B cell (primary cell): ENCODE measurements at regions of chr6 and their contacts with region 1.

Region 1: DNA sequence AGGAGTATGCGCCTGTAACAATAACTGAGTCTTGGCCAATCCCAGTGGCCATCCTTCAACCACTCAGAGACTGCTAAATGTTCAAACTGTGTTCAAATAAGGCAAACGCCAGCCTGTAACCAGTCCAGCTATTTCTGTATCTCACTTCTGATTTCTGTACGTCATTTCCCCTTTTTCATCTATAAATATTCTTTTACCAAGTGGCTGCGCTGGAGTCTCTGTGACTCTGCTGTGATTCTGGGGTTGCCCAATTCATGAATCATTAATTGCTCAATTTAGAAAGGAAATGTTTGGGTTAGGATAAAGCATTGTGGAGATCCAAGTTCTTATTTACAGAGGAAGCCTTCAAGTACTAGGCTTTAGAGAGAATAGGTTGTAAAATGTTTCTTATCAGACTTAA is 89.8 kb upstream of the UST start:
- DNase-seq: peak; percentile 64
- ATAC-seq: peak; percentile 75
- H3K4me3 ChIP-seq: no peak overlapping the region
- H3K4me3 Mint-ChIP-seq: peak overlapping the region; percentile 60
- H3K27ac ChIP-seq: peak overlapping the region; percentile 31 to 47
- H3K27ac Mint-ChIP-seq: peak overlapping the region; percentile 68
- H3K4me1 ChIP-seq: peaks cover 13 to 16% of the 10 kb centered on the region in 2 donors
- H3K4me1 Mint-ChIP-seq: peaks cover 17% of the 10 kb centered on the region
- H3K27me3 ChIP-seq: no peaks in the 10 kb centered on the region
- H3K27me3 Mint-ChIP-seq: no peaks in the 10 kb centered on the region
- CTCF ChIP-seq: no peak

Region 2: GRCh38 chr6:148620579-148621298 is 36.3 kb before region 1 on chr6:
- CTCF ChIA-PET with region 1: no interaction called
- POLR2A ChIA-PET with region 1: no interaction called
- intact Hi-C with region 1: no loop called
- DNase-seq: no peak
- ATAC-seq: no peak
- H3K4me3 ChIP-seq: no peak overlapping the region
- H3K4me3 Mint-ChIP-seq: no peak overlapping the region
- H3K27ac ChIP-seq: no peak overlapping the region
- H3K27ac Mint-ChIP-seq: no peak overlapping the region
- H3K4me1 ChIP-seq: no peaks in the 10 kb centered on the region
- H3K4me1 Mint-ChIP-seq: peaks cover 2% of the 10 kb centered on the region
- H3K27me3 ChIP-seq: no peaks in the 10 kb centered on the region
- H3K27me3 Mint-ChIP-seq: no peaks in the 10 kb centered on the region
- CTCF ChIP-seq: no peak

Region 3: DNA sequence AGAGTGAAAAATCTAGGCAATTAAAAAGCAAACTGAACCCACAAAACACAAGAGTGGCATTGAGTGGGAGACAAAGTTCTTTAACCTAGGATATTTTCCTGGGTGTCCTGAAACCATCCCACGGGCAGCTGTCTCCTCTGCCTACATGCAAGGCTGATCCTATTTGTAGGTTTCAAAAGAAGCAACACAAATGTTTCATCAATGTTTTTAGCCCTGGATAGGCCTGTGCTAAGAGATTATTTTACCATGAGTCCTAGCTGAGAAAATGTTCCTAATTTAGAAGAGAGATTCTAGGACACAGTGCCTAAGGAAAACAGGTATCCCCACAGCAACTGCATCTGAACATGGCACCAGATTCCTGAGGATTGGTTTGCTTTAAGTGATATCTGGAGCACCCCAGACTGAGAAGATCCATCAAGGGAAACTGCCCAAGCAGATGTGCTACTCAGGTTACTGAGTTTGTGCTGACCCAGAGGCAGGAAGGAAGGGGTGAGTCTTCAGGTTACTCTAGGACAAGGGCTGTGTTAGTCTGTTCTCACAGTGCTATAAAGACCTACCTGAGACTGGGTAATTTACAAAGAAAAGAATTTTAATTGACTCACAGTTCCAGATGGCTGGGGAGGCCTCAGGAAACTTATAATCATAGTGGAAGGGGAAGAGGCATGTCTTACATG is 21.8 kb before region 1 on chr6:
- CTCF ChIA-PET with region 1: no interaction called
- POLR2A ChIA-PET with region 1: no interaction called
- intact Hi-C with region 1: loop called (anchors 2 kb)
- DNase-seq: no peak
- ATAC-seq: no peak
- H3K4me3 ChIP-seq: no peak overlapping the region
- H3K4me3 Mint-ChIP-seq: no peak overlapping the region
- H3K27ac ChIP-seq: no peak overlapping the region
- H3K27ac Mint-ChIP-seq: no peak overlapping the region
- H3K4me1 ChIP-seq: peaks cover 13 to 15% of the 10 kb centered on the region in 2 donors
- H3K4me1 Mint-ChIP-seq: peaks cover 13% of the 10 kb centered on the region
- H3K27me3 ChIP-seq: no peaks in the 10 kb centered on the region
- H3K27me3 Mint-ChIP-seq: no peaks in the 10 kb centered on the region
- CTCF ChIP-seq: no peak

Region 4: DNA sequence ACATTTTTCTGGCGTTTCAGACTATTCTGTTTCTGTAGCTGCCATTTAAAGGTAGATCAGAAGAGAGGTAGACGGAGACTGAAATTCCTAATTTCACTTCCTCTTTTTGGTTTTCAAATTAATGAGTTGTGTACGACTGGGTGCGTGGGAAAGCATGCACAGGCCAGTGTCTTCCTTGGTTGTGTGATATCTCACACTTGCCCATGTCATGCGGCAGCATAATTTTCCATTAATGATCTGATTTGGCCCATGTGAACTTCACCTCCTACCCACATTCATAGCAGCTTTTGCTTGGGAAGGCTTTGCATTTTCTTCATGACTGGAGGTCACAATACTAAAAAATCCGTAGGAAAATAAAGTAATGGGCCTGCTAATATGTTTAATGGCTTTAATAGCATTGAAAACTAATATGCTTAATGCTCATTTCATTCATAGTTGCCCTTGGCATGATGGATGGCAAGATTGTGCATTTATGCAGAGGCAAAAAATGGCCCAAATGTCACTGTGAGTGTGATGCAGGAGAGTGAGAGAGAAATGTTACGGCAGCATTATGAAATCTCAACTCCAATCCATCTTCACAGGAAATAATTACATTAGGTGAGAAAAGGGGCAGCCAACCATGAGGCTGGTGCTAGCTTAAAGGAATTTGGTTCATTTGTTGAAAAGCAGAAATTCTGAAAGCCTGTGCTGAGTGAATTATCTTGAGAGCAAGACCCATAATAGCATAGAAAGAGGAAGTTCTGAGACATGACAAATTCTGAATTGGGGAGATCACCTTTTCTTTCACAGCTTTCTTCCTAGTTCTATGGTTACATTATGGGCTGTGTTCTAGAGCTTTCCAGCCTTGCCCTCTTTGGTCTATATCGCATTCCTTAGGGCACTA is 20.8 kb after region 1 on chr6:
- CTCF ChIA-PET with region 1: no interaction called
- POLR2A ChIA-PET with region 1: no interaction called
- intact Hi-C with region 1: loop called (anchors 2 kb)
- DNase-seq: peak; percentile 82
- ATAC-seq: peak; percentile 79
- H3K4me3 ChIP-seq: peak overlapping the region in 3 of 5 experiments; percentile 6 to 50 (median 15)
- H3K4me3 Mint-ChIP-seq: peak overlapping the region; percentile 71
- H3K27ac ChIP-seq: peak overlapping the region; percentile 74 to 81
- H3K27ac Mint-ChIP-seq: peak overlapping the region; percentile 88
- H3K4me1 ChIP-seq: peaks cover 56% of the 10 kb centered on the region in 2 donors
- H3K4me1 Mint-ChIP-seq: peaks cover 54% of the 10 kb centered on the region
- H3K27me3 ChIP-seq: no peaks in the 10 kb centered on the region
- H3K27me3 Mint-ChIP-seq: no peaks in the 10 kb centered on the region
- CTCF ChIP-seq: no peak

Region 5: DNA sequence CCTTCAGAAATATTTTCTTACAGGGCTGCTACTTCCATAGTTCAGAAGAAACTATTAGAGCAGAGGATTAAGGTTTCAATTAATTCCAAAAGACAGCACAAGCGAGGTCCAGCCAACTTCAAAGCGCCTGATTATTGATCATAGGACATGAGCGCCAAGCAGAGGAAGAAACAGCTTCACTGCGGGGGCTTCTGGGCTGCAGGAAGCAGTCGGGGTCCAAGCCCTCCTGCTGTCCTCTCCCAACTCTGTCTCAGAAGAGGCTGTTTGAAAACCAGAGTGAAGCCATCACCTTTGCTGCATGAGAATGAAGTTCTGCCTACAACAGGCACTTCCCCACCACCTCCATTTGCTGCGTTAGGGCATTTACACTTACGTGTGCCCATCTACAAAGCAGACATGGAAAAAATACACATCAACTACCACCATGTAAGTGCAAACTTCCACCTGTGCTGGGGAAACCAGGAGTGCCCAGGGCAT is 767.0 kb after region 1 on chr6:
- CTCF ChIA-PET with region 1: no interaction called
- POLR2A ChIA-PET with region 1: interaction called, 10 read pairs
- intact Hi-C with region 1: no loop called
- DNase-seq: no peak
- ATAC-seq: no peak
- H3K4me3 ChIP-seq: no peak overlapping the region
- H3K4me3 Mint-ChIP-seq: no peak overlapping the region
- H3K27ac ChIP-seq: no peak overlapping the region
- H3K27ac Mint-ChIP-seq: no peak overlapping the region
- H3K4me1 ChIP-seq: no peaks in the 10 kb centered on the region
- H3K4me1 Mint-ChIP-seq: no peaks in the 10 kb centered on the region
- H3K27me3 ChIP-seq: no peaks in the 10 kb centered on the region
- H3K27me3 Mint-ChIP-seq: peaks cover 3% of the 10 kb centered on the region
- CTCF ChIP-seq: no peak